ENCODE measurements at regions of chr2 and their contacts with region 1.

Region 1: GRCh38 chr2:65553504-65554074 is 121.2 kb upstream of the SPRED2 start:
- DNase-seq: no peak
- ATAC-seq: no peak
- H3K4me3 ChIP-seq: no peak overlapping the region
- H3K4me3 Mint-ChIP-seq: no peak overlapping the region
- H3K27ac ChIP-seq: no peak overlapping the region
- H3K27ac Mint-ChIP-seq: no peak overlapping the region
- H3K4me1 ChIP-seq: no peaks in the 10 kb centered on the region
- H3K4me1 Mint-ChIP-seq: peaks cover 0 to 11% (median 5%) of the 10 kb centered on the region in 7 donors
- H3K27me3 ChIP-seq: no peaks in the 10 kb centered on the region
- H3K27me3 Mint-ChIP-seq: peaks cover 0 to 32% (median 6%) of the 10 kb centered on the region in 5 donors

Region 2: GRCh38 chr2:64453770-64454385 is 1099.7 kb before region 1 on chr2 and contains the start of gene LGALSL:
- CTCF ChIA-PET with region 1: no interaction called
- POLR2A ChIA-PET with region 1: no interaction called
- intact Hi-C with region 1: no loop called
- DNase-seq: peak in 7 of 9 donors; percentile 0 to 56 (median 30)
- ATAC-seq: peak; percentile 73
- H3K4me3 ChIP-seq: peak within 1 kb of the TSS; percentile 44
- H3K4me3 Mint-ChIP-seq: peak within 1 kb of the TSS; percentile 75 to 94 (median 90)
- H3K27ac ChIP-seq: peak within 1 kb of the TSS; percentile 21
- H3K27ac Mint-ChIP-seq: peak within 1 kb of the TSS in 8 of 9 donors; percentile 49 to 84 (median 68)
- H3K4me1 ChIP-seq: peaks cover 0 to 4% of the 10 kb centered on the region in 2 donors
- H3K4me1 Mint-ChIP-seq: peaks cover 0 to 16% (median 11%) of the 10 kb centered on the region in 7 donors
- H3K27me3 ChIP-seq: peaks cover 0 to 2% of the 10 kb centered on the region in 2 donors
- H3K27me3 Mint-ChIP-seq: peaks cover 0 to 55% (median 8%) of the 10 kb centered on the region in 5 donors
- total RNA-seq, gene LGALSL: 0.11 to 1.5 (median 0.72) TPM in 4 of 5 experiments, not detected in the other

Region 3: GRCh38 chr2:65256054-65256453 is 297.5 kb before region 1 on chr2:
- CTCF ChIA-PET with region 1: no interaction called
- POLR2A ChIA-PET with region 1: no interaction called
- intact Hi-C with region 1: loop called in 1 of 2 experiments (anchors 2 kb)
- DNase-seq: no peak
- ATAC-seq: no peak
- H3K4me3 ChIP-seq: no peak overlapping the region
- H3K4me3 Mint-ChIP-seq: no peak overlapping the region
- H3K27ac ChIP-seq: no peak overlapping the region
- H3K27ac Mint-ChIP-seq: peak overlapping the region in 1 of 9 donors; percentile 19
- H3K4me1 ChIP-seq: no peaks in the 10 kb centered on the region
- H3K4me1 Mint-ChIP-seq: peaks cover 13 to 25% (median 20%) of the 10 kb centered on the region in 7 donors
- H3K27me3 ChIP-seq: no peaks in the 10 kb centered on the region
- H3K27me3 Mint-ChIP-seq: no peaks in the 10 kb centered on the region

Region 4: GRCh38 chr2:65264821-65265670 is 288.5 kb before region 1 on chr2:
- CTCF ChIA-PET with region 1: interaction called, 7 read pairs
- POLR2A ChIA-PET with region 1: no interaction called
- intact Hi-C with region 1: loop called (anchors 1 kb)
- DNase-seq: peak in 6 of 9 donors; percentile 23 to 39 (median 34)
- ATAC-seq: no peak
- H3K4me3 ChIP-seq: no peak overlapping the region
- H3K4me3 Mint-ChIP-seq: no peak overlapping the region
- H3K27ac ChIP-seq: no peak overlapping the region
- H3K27ac Mint-ChIP-seq: peak overlapping the region in 5 of 9 donors; percentile 13 to 71 (median 57)
- H3K4me1 ChIP-seq: no peaks in the 10 kb centered on the region
- H3K4me1 Mint-ChIP-seq: peaks cover 8 to 28% (median 10%) of the 10 kb centered on the region in 7 donors
- H3K27me3 ChIP-seq: no peaks in the 10 kb centered on the region
- H3K27me3 Mint-ChIP-seq: no peaks in the 10 kb centered on the region

Region 5: DNA sequence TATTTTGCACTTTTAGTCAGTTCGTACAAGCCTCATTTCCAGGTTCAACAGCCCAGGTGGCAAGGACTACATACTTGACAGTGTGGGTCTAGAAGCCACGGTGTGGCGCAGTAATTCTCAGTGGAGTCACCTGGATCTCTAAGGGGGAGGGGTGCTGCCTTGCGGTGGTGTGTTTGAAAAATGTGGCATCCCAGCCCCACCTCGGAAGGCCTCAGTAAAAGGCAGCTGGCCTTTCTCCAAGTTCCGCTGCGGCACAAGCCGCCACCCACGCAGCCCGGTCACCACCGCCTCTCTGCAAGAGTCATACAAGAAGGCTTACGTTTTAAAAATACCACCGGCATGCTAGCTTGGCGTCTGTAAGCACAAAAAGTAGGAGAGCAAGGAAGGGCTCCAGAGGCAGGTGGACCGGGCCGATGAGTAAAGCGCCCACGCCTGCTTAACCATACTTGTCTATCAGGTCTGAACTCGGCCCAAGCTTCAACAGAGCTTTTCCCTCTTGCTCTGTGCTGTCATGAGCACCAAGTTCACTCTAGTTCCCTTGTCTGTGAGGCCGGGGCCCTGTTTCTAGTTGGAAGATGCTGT is 170.7 kb before region 1 on chr2:
- CTCF ChIA-PET with region 1: no interaction called
- POLR2A ChIA-PET with region 1: no interaction called
- intact Hi-C with region 1: loop called (anchors 1 kb)
- DNase-seq: peak; percentile 31 to 84 (median 67)
- ATAC-seq: peak; percentile 87
- H3K4me3 ChIP-seq: peak overlapping the region; percentile 11
- H3K4me3 Mint-ChIP-seq: peak overlapping the region; percentile 50 to 83 (median 78)
- H3K27ac ChIP-seq: peak overlapping the region; percentile 41
- H3K27ac Mint-ChIP-seq: peak overlapping the region; percentile 26 to 91 (median 57)
- H3K4me1 ChIP-seq: peaks cover 0 to 23% of the 10 kb centered on the region in 2 donors
- H3K4me1 Mint-ChIP-seq: peaks cover 18 to 41% (median 26%) of the 10 kb centered on the region in 7 donors
- H3K27me3 ChIP-seq: no peaks in the 10 kb centered on the region
- H3K27me3 Mint-ChIP-seq: no peaks in the 10 kb centered on the region